Aorta (tissue), 5 donors: ENCODE measurements at regions of chr1 and their contacts with region 1.

Region 1: DNA sequence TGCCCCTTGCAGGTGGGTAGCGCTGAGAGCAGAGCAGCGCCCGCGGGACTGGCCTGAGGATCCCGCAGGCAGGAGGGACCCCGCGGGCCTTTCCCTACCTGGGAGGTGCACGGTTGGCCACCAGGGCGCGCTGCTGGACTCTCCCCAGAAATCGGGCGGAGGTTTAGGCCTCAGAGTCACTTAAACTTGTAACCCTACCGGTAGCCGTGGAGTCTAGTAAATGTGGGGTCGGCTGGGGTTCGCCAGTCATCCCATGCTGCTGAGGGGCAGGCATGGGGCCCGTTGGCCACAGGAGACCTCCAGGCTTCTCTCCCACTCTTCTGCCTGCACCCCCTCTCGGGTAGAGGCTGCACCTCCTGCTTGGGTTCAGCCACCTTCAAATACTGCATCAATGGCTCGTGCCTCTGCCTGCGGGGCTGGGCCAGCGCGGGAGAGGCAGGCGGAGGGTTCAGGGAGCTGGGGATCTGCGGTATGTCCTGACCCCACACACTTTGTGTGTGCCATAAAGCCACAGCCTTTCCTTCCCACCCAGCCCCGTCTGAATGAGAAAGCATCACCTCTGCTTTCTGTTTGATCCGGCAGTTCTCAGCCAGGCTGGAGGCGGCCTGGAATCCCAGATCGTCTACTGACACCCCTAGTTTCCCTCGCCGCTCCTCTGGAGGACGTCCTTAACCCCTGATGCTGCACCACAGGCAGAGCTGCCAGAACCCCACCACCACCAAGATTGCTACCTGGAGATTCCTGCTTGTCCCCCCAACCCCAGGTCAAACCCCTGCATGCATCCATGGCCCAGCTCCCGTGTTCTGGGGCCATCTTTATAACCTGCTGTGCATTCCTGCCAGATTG is 12.3 kb upstream of the GSTM4 start:
- DNase-seq: peak; percentile 92 to 96
- ATAC-seq: peak; percentile 77
- H3K4me3 ChIP-seq: no peak overlapping the region
- H3K27ac ChIP-seq: no peak overlapping the region
- H3K4me1 ChIP-seq: no peaks in the 10 kb centered on the region
- H3K27me3 ChIP-seq: no peaks in the 10 kb centered on the region

Region 2: GRCh38 chr1:109357616-109358015 is 286.0 kb before region 1 on chr1:
- intact Hi-C with region 1: no loop called
- DNase-seq: no peak
- ATAC-seq: no peak
- H3K4me3 ChIP-seq: no peak overlapping the region
- H3K27ac ChIP-seq: peak overlapping the region; percentile 51 to 57
- H3K4me1 ChIP-seq: peaks cover 8 to 17% of the 10 kb centered on the region in 2 donors
- H3K27me3 ChIP-seq: no peaks in the 10 kb centered on the region

Region 3: DNA sequence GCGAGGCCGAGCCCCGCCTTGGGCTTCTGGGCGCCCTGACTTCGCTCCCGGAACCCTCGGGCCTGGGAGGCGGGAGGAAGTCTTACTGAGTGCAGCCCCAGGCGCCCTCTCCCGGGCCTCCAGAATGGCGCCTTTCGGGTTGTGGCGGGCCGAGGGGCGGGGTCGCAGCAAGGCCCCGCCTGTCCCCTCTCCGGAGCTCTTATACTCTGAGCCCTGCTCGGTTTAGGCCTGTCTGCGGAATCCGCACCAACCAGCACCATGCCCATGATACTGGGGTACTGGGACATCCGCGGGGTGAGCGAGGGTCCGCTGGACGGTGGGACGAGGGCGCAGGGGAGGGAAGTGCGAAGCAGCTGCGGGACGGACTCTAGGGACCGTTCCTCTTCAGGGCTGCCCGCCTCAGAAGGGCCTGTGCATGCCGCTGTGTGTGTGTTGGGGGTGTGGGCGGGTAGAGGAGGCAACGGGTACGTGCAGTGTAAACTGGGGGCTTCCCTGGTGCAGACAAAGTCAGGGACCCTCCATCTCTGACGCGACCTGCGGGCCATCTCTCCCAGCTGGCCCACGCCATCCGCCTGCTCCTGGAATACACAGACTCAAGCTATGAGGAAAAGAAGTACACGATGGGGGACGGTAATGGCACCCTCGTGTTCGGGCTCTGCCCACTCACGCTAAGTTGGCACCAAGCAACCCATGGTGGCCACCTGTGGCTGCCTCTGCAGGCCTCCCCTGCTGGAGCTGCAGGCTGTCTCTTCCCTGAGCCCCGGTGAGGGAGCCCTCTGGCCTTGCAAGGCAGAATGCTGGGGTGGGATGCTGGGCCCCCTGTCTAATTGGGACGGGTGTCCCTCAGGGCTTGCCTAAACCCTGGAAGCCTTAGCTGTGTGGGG is 44.2 kb after region 1 on chr1 and contains the start of gene GSTM1:
- intact Hi-C with region 1: loop called in 1 of 2 experiments (anchors 2 kb)
- DNase-seq: peak in 1 of 2 donors; percentile 93
- ATAC-seq: no peak
- H3K4me3 ChIP-seq: peak within 1 kb of the TSS in 1 of 2 donors; percentile 37
- H3K27ac ChIP-seq: peak within 1 kb of the TSS in 1 of 2 donors; percentile 66
- H3K4me1 ChIP-seq: no peaks in the 10 kb centered on the region
- H3K27me3 ChIP-seq: no peaks in the 10 kb centered on the region
- total RNA-seq, gene GSTM1: 63.8 TPM in 1 of 2 donors, not detected in the other

Region 4: GRCh38 chr1:109773146-109773899 is 129.7 kb after region 1 on chr1:
- intact Hi-C with region 1: loop called (anchors 2 kb)
- DNase-seq: peak; percentile 90
- ATAC-seq: peak; percentile 89
- H3K4me3 ChIP-seq: no peak overlapping the region
- H3K27ac ChIP-seq: no peak overlapping the region
- H3K4me1 ChIP-seq: no peaks in the 10 kb centered on the region
- H3K27me3 ChIP-seq: no peaks in the 10 kb centered on the region

Region 5: GRCh38 chr1:109979489-109980091 is 336.0 kb after region 1 on chr1:
- intact Hi-C with region 1: loop called in 1 of 2 experiments (anchors 5 kb)
- DNase-seq: peak in 1 of 2 donors; percentile 62
- ATAC-seq: no peak
- H3K4me3 ChIP-seq: no peak overlapping the region
- H3K27ac ChIP-seq: no peak overlapping the region
- H3K4me1 ChIP-seq: no peaks in the 10 kb centered on the region
- H3K27me3 ChIP-seq: no peaks in the 10 kb centered on the region

Region 6: GRCh38 chr1:109984456-109985275 is 341.1 kb after region 1 on chr1 and contains the start of gene AHCYL1:
- intact Hi-C with region 1: loop called (anchors 5 kb)
- DNase-seq: peak; percentile 100
- ATAC-seq: peak; percentile 98
- H3K4me3 ChIP-seq: peak within 1 kb of the TSS; percentile 2 to 65
- H3K27ac ChIP-seq: peak within 1 kb of the TSS; percentile 32 to 82
- H3K4me1 ChIP-seq: no peaks in the 10 kb centered on the region
- H3K27me3 ChIP-seq: no peaks in the 10 kb centered on the region
- total RNA-seq, gene AHCYL1: 69.0 to 79.0 TPM